ENCODE measurements at regions of chr4 and their contacts with region 1.

Region 1: DNA sequence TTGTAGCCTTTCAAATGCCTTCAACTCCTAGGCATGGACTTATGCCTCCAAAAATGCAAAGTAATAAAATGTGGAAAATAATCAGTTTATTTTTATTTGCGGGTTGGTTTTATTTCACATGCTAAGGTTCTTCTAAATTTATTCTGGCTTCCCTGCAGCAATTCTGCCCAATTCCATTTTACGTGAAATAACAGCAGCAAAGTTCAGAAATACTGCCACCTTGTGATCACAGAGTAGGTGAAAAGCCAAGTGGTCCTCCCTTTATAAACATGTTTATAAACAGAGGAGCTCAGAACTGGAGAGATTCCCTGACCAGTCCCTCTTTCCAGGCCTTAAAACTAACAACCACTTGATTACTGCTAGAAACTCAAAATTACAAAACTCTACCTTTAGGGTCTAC is 14.7 kb upstream of the DCHS2 start:
- DNase-seq: no peak
- ATAC-seq: peak; percentile 68
- H3K4me3 ChIP-seq: no peak overlapping the region
- H3K27ac ChIP-seq: no peak overlapping the region
- H3K4me1 ChIP-seq: no peaks in the 10 kb centered on the region
- H3K27me3 ChIP-seq: peaks cover 0 to 5% of the 10 kb centered on the region in 2 experiments; a peak in 1 of 4 replicates
- CTCF ChIP-seq: peak; percentile 55 to 61 (median 58); a peak in 5 of 6 replicates
- EP300 ChIP-seq: no peak
- POLR2A ChIP-seq: no peak
- RAD21 ChIP-seq: peak; percentile 68

Region 2: DNA sequence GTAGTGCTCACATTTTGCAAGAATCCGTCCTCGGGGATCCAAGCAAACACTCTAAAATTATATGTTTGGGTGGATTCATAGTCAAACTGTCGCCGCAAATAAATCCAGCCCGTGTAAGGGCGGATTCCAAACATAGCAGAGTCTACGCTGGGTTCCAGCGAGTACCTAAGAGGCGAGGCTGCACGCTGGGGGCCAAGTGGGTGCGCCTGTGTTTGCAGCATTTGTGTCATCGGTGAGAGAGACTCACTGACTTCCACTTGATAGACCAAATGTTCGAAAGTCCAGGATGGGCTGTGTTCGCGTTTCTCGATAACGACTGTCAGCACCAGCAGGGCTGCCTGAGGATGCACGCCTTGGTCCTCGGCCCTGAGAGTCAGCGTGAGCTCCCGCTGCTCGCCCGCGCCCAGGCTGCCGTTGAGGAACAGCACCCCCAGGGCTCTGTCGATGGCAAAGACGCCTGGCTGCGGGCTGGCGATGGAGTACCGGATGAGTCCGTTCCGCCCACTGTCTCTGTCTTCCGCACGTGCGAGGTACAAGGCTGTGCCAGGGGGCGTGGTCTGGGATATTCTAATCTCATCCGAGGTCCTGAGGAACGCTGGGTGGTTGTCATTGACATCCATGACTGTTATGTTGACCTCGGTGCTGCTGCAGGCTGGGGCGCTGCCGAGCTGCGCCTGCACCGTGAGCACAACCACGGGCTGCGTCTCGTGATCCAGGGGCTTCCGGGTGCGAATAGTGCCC is 173.4 kb before region 1 on chr4:
- CTCF ChIA-PET with region 1: interaction called, 36 read pairs
- POLR2A ChIA-PET with region 1: interaction called, 3 read pairs
- RAD21 ChIA-PET with region 1: interaction called, 14 read pairs
- SMC1A ChIA-PET with region 1: interaction called, 6 read pairs
- in situ Hi-C with region 1: loop called (anchors 10 kb)
- intact Hi-C with region 1: loop called (anchors 2 kb)
- DNase-seq: peak; percentile 11
- ATAC-seq: peak; percentile 90
- H3K4me3 ChIP-seq: peak overlapping the region; percentile 46; the same call in 1 of the 2 replicates
- H3K27ac ChIP-seq: no peak overlapping the region
- H3K4me1 ChIP-seq: peaks cover 7% of the 10 kb centered on the region
- H3K27me3 ChIP-seq: peaks cover 2 to 5% of the 10 kb centered on the region in 2 experiments; a peak in 2 of 4 replicates
- CTCF ChIP-seq: peak in 2 of 3 experiments; percentile 19 to 26; a peak in 3 of 6 replicates
- EP300 ChIP-seq: no peak
- POLR2A ChIP-seq: no peak
- RAD21 ChIP-seq: no peak

Region 3: GRCh38 chr4:154344686-154345085 is 161.6 kb before region 1 on chr4:
- CTCF ChIA-PET with region 1: interaction called, 7 read pairs
- POLR2A ChIA-PET with region 1: no interaction called
- RAD21 ChIA-PET with region 1: interaction called, 4 read pairs
- SMC1A ChIA-PET with region 1: interaction called, 6 read pairs
- in situ Hi-C with region 1: no loop called
- intact Hi-C with region 1: loop called (anchors 1 kb)
- DNase-seq: no peak
- ATAC-seq: peak; percentile 86
- H3K4me3 ChIP-seq: no peak overlapping the region
- H3K27ac ChIP-seq: no peak overlapping the region
- H3K4me1 ChIP-seq: no peaks in the 10 kb centered on the region
- H3K27me3 ChIP-seq: no peaks in the 10 kb centered on the region; a peak in 1 of 4 replicates
- CTCF ChIP-seq: peak; percentile 6 to 34 (median 25); a peak in 2 of 6 replicates
- EP300 ChIP-seq: no peak
- POLR2A ChIP-seq: no peak
- RAD21 ChIP-seq: 0 out of 2 replicates have a peak, but pooled peaks have one; percentile 7

Region 4: DNA sequence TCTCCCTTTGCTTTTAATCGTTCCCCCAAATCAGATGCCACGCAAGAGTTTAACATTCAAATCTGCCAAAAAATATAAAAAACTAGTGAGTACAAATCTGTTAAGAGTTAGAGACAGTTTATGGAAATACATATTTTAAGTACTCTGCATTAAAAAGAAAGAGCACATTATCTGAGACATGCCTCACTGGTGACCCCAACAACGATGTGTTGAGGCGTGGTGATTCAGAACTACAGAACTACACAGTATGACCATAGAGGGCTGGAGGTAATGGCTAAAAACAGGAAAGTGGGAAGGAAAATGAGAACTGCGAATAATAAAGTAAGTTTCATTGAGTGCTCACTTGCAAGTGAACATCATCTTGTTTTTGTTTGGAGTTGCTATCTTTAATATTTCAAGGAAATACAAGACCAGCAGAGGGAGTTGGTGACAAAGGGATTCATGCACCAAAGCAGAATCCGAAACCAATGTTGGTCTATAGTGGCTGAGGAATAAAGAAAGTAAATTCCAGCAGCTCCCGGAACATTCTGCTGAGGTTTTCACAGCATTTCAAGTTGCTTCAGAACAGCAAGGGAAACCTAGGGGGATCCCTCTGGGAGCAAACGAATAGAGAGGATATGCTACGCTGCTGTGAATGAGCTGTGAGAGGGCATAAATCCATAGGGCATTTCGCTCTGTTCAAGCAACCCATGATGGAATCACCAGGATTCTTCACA is 106.8 kb before region 1 on chr4:
- CTCF ChIA-PET with region 1: interaction called, 6 read pairs
- POLR2A ChIA-PET with region 1: no interaction called
- RAD21 ChIA-PET with region 1: interaction called, 7 read pairs
- SMC1A ChIA-PET with region 1: interaction called, 5 read pairs
- in situ Hi-C with region 1: no loop called
- intact Hi-C with region 1: loop called (anchors 1 kb)
- DNase-seq: no peak
- ATAC-seq: peak; percentile 34; the same call in 1 of the 3 replicates
- H3K4me3 ChIP-seq: no peak overlapping the region
- H3K27ac ChIP-seq: no peak overlapping the region
- H3K4me1 ChIP-seq: no peaks in the 10 kb centered on the region; the same call in 1 of the 2 replicates
- H3K27me3 ChIP-seq: no peaks in the 10 kb centered on the region; a peak in 1 of 4 replicates
- CTCF ChIP-seq: peak; percentile 12 to 44 (median 17); a peak in 3 of 6 replicates
- EP300 ChIP-seq: no peak
- POLR2A ChIP-seq: no peak
- RAD21 ChIP-seq: peak; percentile 39

Region 5: GRCh38 chr4:154416190-154416547 is 90.1 kb before region 1 on chr4:
- CTCF ChIA-PET with region 1: interaction called, 4 read pairs
- POLR2A ChIA-PET with region 1: no interaction called
- RAD21 ChIA-PET with region 1: interaction called, 3 read pairs
- SMC1A ChIA-PET with region 1: interaction called, 3 read pairs
- in situ Hi-C with region 1: no loop called
- intact Hi-C with region 1: loop called (anchors 5 kb)
- DNase-seq: no peak
- ATAC-seq: peak; percentile 63
- H3K4me3 ChIP-seq: peak overlapping the region; percentile 78
- H3K27ac ChIP-seq: no peak overlapping the region; the same call in 1 of the 2 replicates
- H3K4me1 ChIP-seq: peaks cover 17% of the 10 kb centered on the region
- H3K27me3 ChIP-seq: 0 out of 4 replicates have a peak, but pooled peaks cover 0 to 2% of the 10 kb centered on the region in 2 experiments
- CTCF ChIP-seq: peak in 1 of 3 experiments; percentile 13; a peak in 2 of 6 replicates
- EP300 ChIP-seq: no peak
- POLR2A ChIP-seq: no peak
- RAD21 ChIP-seq: no peak

Region 6: DNA sequence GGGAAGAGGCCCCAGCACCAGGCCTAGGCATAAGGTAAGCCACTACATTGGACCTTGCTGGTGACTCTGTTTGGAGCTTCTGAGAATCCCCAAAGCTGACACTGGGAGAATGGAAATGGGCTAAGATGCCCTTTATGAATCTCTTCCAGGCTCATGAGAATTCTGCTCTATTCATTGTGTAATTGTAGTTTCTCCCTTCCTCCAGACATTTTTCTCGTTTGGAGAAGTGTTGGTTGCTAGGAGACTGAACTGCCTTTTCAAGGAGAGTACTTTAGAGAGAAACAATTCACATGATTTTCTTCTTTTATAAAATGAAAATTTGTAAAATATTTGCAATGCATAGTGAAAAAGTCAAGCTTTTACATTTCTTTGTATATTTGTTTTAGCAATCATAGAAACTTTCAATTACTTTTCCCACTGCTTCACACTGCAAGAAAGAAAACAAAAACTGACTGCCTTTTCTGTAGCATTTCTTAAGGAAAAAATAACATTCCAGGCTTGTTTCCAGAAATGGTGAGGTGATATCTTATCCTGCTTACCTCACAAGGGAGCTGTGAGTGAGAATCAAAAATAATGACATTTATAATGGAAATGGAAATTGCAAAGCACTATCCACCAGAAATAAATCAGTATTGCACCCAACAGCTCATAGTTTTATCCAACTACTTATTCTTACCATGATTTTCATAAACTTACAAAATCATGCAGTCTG is 10.2 kb after region 1 on chr4:
- CTCF ChIA-PET with region 1: interaction called, 12 read pairs
- POLR2A ChIA-PET with region 1: no interaction called
- RAD21 ChIA-PET with region 1: interaction called, 5 read pairs
- SMC1A ChIA-PET with region 1: interaction called, 14 read pairs
- in situ Hi-C with region 1: no loop called
- intact Hi-C with region 1: no loop called
- DNase-seq: no peak
- ATAC-seq: no peak
- H3K4me3 ChIP-seq: no peak overlapping the region
- H3K27ac ChIP-seq: no peak overlapping the region
- H3K4me1 ChIP-seq: no peaks in the 10 kb centered on the region
- H3K27me3 ChIP-seq: peaks cover 0 to 3% of the 10 kb centered on the region in 2 experiments; a peak in 3 of 4 replicates
- CTCF ChIP-seq: no peak
- EP300 ChIP-seq: no peak
- POLR2A ChIP-seq: no peak
- RAD21 ChIP-seq: no peak

Measured in GM12878 (cell line).